SK-N-SH (cell line): ENCODE measurements at regions of chr19 and their contacts with region 1.

Region 1: GRCh38 chr19:53879140-53880081 is 2.6 kb upstream of the PRKCG start:
- DNase-seq: peak; percentile 98
- H3K4me3 ChIP-seq: peak overlapping the region; percentile 62
- H3K27ac ChIP-seq: peak overlapping the region; percentile 7 to 72; a peak in 2 of 4 replicates
- H3K4me1 ChIP-seq: peaks cover 0 to 14% of the 10 kb centered on the region in 2 experiments; a peak in 1 of 4 replicates
- H3K27me3 ChIP-seq: peaks cover 26% of the 10 kb centered on the region
- CTCF ChIP-seq: no peak
- EP300 ChIP-seq: no peak
- RAD21 ChIP-seq: no peak

Region 2: DNA sequence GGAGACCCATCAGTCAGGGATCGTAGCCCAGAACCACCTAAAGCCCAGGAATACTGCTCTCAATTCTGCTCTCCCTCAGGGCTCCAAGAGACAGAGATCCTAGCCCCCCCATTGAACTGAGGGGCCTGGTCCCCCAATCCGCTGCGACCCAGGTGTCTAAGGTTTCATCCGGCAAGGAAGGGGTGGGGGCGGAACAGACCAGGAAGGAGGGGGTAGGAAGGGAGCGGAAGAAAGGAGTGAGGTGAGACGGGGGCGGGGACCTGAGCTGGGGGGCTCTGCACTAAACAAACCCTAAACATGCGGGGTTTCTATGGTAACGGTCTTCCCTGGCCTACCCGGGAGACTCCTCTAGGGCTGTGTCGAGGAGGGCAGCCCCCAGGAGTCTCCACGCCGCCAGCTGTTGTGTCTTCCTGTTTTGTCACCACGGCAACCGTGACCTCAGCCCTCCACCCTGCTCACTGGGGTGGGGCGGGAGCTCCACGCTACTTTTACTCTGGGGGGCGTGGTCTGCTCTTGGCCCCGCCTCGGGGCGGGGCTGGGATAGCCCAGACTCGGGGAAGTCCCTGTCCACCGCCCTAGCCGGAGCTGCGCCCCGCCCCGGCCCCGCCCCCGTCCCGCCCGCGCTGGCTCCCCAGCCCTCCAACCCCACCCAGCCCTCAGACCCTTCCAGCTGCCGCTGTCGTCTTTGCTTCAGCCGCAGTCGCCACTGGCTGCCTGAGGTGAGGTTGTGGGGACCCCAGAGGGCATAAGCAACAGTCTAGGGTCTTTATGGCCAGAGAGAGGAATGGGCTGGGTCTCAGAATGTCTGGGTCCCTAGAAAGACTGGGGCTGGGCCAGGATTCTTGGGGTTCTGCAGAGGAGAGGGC is 12.0 kb before region 1 on chr19 and contains the start of gene MYADM:
- CTCF ChIA-PET with region 1: interaction called, 10 read pairs
- POLR2A ChIA-PET with region 1: interaction called, 16 read pairs
- DNase-seq: peak; percentile 97
- H3K4me3 ChIP-seq: peak within 1 kb of the TSS; percentile 79 to 86
- H3K27ac ChIP-seq: peak within 1 kb of the TSS; percentile 90 to 96
- H3K4me1 ChIP-seq: peaks cover 5 to 16% of the 10 kb centered on the region in 2 experiments; a peak in 2 of 4 replicates
- H3K27me3 ChIP-seq: no peaks in the 10 kb centered on the region
- CTCF ChIP-seq: no peak
- EP300 ChIP-seq: no peak
- RAD21 ChIP-seq: no peak
- polyA plus RNA-seq, gene MYADM: 28.3 and 38.7 TPM in 2 replicates

Region 3: DNA sequence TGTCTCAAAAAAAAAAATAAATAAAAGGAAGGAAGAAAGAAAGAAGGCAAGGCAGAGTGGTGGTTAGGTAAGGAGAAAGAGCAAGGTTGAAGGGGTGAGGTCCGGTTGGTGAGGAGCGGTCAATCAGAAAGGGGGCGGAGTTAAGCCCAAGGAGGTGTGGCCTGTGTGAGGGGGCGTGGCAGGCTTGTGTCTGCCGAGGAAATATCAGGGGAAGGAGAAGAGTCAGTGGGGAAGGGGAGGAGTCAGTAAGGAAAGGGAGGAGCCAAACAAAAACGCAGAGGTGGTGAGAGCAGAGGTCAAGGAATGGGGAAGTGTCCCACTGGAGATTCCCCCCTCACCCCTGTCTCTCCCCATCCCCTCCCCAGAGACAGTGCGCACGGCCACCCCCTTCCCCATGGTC is 35.6 kb after region 1 on chr19:
- CTCF ChIA-PET with region 1: no interaction called
- POLR2A ChIA-PET with region 1: no interaction called
- DNase-seq: peak; percentile 76
- H3K4me3 ChIP-seq: no peak overlapping the region
- H3K27ac ChIP-seq: no peak overlapping the region
- H3K4me1 ChIP-seq: peaks cover 0 to 5% of the 10 kb centered on the region in 2 experiments; a peak in 1 of 4 replicates
- H3K27me3 ChIP-seq: no peaks in the 10 kb centered on the region
- CTCF ChIP-seq: no peak
- EP300 ChIP-seq: no peak
- RAD21 ChIP-seq: no peak

Region 4: GRCh38 chr19:53977429-53977990 is 98.1 kb after region 1 on chr19:
- CTCF ChIA-PET with region 1: no interaction called
- POLR2A ChIA-PET with region 1: no interaction called
- DNase-seq: peak; percentile 81
- H3K4me3 ChIP-seq: peak overlapping the region; percentile 49 to 60
- H3K27ac ChIP-seq: peak overlapping the region; percentile 81 to 90
- H3K4me1 ChIP-seq: peaks cover 7 to 23% of the 10 kb centered on the region in 2 experiments; a peak in 3 of 4 replicates
- H3K27me3 ChIP-seq: no peaks in the 10 kb centered on the region
- CTCF ChIP-seq: no peak
- EP300 ChIP-seq: no peak
- RAD21 ChIP-seq: no peak